ENCODE measurements at regions of chr9 and their contacts with region 1.

Region 1: DNA sequence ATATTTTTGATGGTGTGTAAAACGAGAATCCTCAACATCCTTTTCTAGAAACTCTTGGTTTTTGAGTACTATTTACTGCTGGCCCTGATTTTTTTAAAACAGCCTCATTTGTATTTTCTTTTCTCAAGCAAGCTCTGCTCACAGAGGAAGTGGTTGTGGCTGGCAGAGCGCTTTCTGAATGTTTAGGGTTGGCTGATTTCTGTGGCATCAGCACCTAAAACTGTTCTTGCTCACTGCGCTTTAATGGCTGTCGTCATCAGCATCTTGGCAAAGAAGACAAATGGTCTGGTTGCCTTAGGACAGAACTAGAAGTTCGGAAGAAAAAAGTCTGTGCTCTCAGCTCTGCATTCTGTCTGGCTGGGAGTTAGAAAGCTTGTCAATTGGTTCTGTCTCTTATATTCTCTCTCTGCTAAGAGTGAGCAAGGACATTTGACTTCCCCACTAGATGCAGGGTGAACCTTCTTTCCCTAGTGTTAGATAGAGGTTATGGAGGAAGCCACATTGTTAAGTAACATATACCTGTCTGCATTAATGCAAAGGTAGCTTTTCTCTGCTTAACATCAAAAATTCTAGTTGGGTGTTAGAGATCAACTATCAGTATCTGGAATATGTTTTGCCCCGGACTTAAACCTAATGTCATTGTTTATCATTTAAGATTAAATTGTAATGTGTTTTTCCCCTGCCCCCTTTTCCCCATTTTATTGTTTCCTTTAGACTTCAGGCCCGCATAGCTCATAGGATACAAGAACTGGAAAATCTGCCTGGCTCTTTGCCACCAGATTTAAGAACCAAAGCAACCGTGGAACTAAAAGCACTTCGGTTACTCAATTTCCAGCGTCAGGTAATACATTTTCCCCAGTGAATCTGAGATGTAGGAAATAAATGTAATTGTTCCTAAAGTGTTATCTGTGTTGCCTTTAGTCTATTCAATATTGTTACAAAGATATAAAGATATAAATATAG is 39.0 kb downstream of the SMARCA2 start:
- DNase-seq: peak; percentile 91
- H3K4me3 ChIP-seq: peak overlapping the region; percentile 50
- H3K27ac ChIP-seq: peak overlapping the region; percentile 76
- H3K4me1 ChIP-seq: peaks cover 39% of the 10 kb centered on the region
- H3K27me3 ChIP-seq: no peaks in the 10 kb centered on the region

Region 2: DNA sequence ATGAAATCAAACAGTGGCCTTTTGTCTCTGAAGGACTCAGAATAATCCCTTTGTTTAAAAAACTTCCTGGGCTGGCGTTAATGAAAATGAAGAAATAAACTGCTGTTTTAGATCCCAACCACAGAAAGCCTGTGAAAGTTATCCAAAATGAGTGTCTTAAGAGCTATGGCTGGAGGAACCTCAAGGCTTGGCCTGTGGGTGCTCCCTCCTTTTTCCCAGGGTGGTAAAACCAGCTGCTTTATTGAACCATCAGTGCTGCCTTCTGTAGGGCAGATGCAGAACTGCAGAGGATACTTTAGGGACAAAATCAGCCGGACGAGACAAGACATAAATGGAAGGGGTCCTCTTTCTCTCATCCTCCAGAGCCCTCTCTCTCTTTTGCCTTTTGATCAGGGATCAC is 61.9 kb after region 1 on chr9:
- in situ Hi-C with region 1: loop called (anchors 10 kb)
- DNase-seq: peak; percentile 44
- H3K4me3 ChIP-seq: no peak overlapping the region
- H3K27ac ChIP-seq: no peak overlapping the region
- H3K4me1 ChIP-seq: peaks cover 3% of the 10 kb centered on the region
- H3K27me3 ChIP-seq: no peaks in the 10 kb centered on the region

Region 3: GRCh38 chr9:3136686-3137346 is 1082.7 kb after region 1 on chr9:
- in situ Hi-C with region 1: no loop called
- DNase-seq: peak; percentile 2
- H3K4me3 ChIP-seq: no peak overlapping the region
- H3K27ac ChIP-seq: no peak overlapping the region
- H3K4me1 ChIP-seq: peaks cover 21% of the 10 kb centered on the region; the same call in 1 of the 2 replicates
- H3K27me3 ChIP-seq: no peaks in the 10 kb centered on the region

Measured in GM23248 (cell line).